GM10248 (cell line): ENCODE measurements at regions of chr1 and their contacts with region 1.

Region 1: DNA sequence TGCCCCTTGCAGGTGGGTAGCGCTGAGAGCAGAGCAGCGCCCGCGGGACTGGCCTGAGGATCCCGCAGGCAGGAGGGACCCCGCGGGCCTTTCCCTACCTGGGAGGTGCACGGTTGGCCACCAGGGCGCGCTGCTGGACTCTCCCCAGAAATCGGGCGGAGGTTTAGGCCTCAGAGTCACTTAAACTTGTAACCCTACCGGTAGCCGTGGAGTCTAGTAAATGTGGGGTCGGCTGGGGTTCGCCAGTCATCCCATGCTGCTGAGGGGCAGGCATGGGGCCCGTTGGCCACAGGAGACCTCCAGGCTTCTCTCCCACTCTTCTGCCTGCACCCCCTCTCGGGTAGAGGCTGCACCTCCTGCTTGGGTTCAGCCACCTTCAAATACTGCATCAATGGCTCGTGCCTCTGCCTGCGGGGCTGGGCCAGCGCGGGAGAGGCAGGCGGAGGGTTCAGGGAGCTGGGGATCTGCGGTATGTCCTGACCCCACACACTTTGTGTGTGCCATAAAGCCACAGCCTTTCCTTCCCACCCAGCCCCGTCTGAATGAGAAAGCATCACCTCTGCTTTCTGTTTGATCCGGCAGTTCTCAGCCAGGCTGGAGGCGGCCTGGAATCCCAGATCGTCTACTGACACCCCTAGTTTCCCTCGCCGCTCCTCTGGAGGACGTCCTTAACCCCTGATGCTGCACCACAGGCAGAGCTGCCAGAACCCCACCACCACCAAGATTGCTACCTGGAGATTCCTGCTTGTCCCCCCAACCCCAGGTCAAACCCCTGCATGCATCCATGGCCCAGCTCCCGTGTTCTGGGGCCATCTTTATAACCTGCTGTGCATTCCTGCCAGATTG is 12.3 kb upstream of the GSTM4 start:
- DNase-seq: peak; percentile 88
- CTCF ChIP-seq: peak; percentile 92

Region 2: GRCh38 chr1:109539676-109540075 is 103.9 kb before region 1 on chr1 and contains the start of gene GPR61:
- CTCF ChIA-PET with region 1: interaction called, 99 read pairs
- POLR2A ChIA-PET with region 1: no interaction called
- DNase-seq: no peak
- CTCF ChIP-seq: no peak

Region 3: GRCh38 chr1:109598655-109599054 is 45.0 kb before region 1 on chr1:
- CTCF ChIA-PET with region 1: interaction called, 24 read pairs
- POLR2A ChIA-PET with region 1: no interaction called
- DNase-seq: no peak
- CTCF ChIP-seq: no peak

Region 4: GRCh38 chr1:109630081-109630897 is 13.3 kb before region 1 on chr1:
- CTCF ChIA-PET with region 1: interaction called, 135 read pairs
- POLR2A ChIA-PET with region 1: interaction called, 4 read pairs
- DNase-seq: peak; percentile 59
- CTCF ChIP-seq: peak; percentile 29

Region 5: DNA sequence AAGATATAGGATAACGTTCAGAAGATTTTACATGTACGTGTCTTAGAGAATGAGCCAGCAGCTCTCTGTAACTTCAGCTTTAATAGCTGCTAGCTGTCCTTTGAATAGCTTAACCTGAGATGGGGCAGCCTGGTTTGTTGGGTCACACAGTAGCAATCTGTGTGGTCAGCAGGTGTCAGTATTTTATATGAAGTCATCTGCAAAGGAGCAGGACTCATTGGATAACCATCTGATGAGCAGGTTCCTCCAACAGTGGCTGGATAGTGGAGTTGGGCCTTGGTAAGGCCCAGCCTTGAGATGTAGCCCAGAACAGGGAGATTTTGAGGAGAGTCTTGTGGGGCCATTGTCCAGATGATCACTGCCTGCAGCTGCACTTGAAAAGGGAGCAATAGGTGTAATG is 74.9 kb after region 1 on chr1:
- CTCF ChIA-PET with region 1: interaction called, 11 read pairs
- POLR2A ChIA-PET with region 1: no interaction called
- DNase-seq: no peak
- CTCF ChIP-seq: no peak

Region 6: GRCh38 chr1:109959974-109960744 is 316.6 kb after region 1 on chr1:
- CTCF ChIA-PET with region 1: interaction called, 15 read pairs
- POLR2A ChIA-PET with region 1: no interaction called
- DNase-seq: no peak
- CTCF ChIP-seq: no peak